Activated CD8-positive, alpha-beta T cell treated with anti-CD3 and anti-CD28 coated beads for 36 hours (primary cell): ENCODE measurements at regions of chr14 and their contacts with region 1.

Region 1: GRCh38 chr14:22570132-22570949 is 18.7 kb downstream of the DAD1 start:
- DNase-seq: peak; percentile 91
- ATAC-seq: peak; percentile 81
- H3K4me3 Mint-ChIP-seq: peak overlapping the region; percentile 86
- H3K27ac Mint-ChIP-seq: peak overlapping the region; percentile 94
- H3K4me1 Mint-ChIP-seq: peaks cover 60% of the 10 kb centered on the region
- H3K27me3 Mint-ChIP-seq: no peaks in the 10 kb centered on the region
- CTCF ChIP-seq: peak; percentile 91

Region 2: DNA sequence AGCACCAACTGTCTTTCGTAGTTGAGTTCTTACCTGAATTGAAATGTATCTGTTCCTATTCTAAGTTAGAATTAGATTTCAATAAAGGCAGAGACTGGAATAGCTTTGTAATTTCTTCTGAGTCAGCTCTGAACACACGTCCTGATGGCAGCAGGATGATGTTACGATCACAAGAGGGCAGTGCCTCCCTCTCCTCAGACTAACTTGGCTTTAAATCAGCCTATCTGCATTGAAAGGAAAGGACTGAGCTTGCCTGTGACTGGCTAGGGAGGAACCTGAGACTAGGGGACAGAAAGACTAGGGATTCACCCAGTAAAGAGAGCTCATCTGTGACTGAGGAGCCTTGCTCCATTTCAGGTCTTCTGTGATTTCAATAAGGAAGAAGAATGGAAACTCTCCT is 573.0 kb before region 1 on chr14:
- CTCF ChIA-PET with region 1: interaction called, 15 read pairs
- POLR2A ChIA-PET with region 1: interaction called, 5 read pairs
- intact Hi-C with region 1: no loop called
- DNase-seq: peak; percentile 66
- ATAC-seq: peak; percentile 88
- H3K4me3 Mint-ChIP-seq: peak overlapping the region; percentile 95
- H3K27ac Mint-ChIP-seq: peak overlapping the region; percentile 96
- H3K4me1 Mint-ChIP-seq: peaks cover 20% of the 10 kb centered on the region
- H3K27me3 Mint-ChIP-seq: no peaks in the 10 kb centered on the region
- CTCF ChIP-seq: peak; percentile 33

Region 3: DNA sequence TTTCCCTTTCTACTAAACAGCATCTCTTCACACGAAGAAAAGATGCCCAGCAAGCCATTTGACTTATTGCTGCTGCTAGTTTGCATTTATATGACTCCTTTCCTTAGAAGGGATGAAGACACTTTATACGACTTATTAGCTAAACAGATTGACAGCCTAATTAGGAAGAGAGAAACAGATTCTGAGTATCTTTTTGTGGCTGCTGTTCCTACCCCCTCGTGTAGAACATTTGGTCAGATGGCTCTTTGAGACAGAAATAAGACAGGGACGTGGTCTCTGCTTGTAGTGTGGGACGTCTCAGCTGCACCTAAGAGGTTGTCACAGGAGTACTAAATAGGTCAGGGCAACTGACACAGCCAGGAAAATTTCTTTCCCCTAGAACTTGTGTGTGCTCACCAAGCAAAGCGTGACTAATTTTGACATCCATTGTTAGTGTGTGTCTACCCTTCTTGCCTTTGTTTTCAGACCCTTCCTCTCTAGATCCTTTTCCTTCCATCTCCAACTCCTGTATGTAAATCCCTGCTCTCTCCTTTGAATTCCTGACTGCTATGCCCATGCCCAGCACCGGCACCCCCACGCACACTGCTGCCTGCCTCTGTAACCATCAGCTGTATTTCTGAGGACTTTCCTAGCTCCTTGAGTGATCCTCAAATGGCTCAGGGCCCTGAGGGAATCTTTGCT is 64.5 kb before region 1 on chr14:
- CTCF ChIA-PET with region 1: interaction called, 8 read pairs
- POLR2A ChIA-PET with region 1: interaction called, 33 read pairs
- intact Hi-C with region 1: no loop called
- DNase-seq: no peak
- ATAC-seq: peak; percentile 38
- H3K4me3 Mint-ChIP-seq: peak overlapping the region; percentile 79
- H3K27ac Mint-ChIP-seq: peak overlapping the region; percentile 96
- H3K4me1 Mint-ChIP-seq: peaks cover 10% of the 10 kb centered on the region
- H3K27me3 Mint-ChIP-seq: no peaks in the 10 kb centered on the region
- CTCF ChIP-seq: no peak

Region 4: GRCh38 chr14:22556990-22557623 is 13.2 kb before region 1 on chr14:
- CTCF ChIA-PET with region 1: interaction called, 259 read pairs
- POLR2A ChIA-PET with region 1: interaction called, 397 read pairs
- intact Hi-C with region 1: loop called (anchors 1 kb)
- DNase-seq: peak; percentile 93
- ATAC-seq: peak; percentile 5
- H3K4me3 Mint-ChIP-seq: peak overlapping the region; percentile 82
- H3K27ac Mint-ChIP-seq: peak overlapping the region; percentile 94
- H3K4me1 Mint-ChIP-seq: peaks cover 84% of the 10 kb centered on the region
- H3K27me3 Mint-ChIP-seq: peaks cover 3% of the 10 kb centered on the region
- CTCF ChIP-seq: peak; percentile 100

Region 5: GRCh38 chr14:22766456-22767322 is 196.3 kb after region 1 on chr14 and contains the start of gene OXA1L:
- CTCF ChIA-PET with region 1: interaction called, 38 read pairs
- POLR2A ChIA-PET with region 1: interaction called, 14 read pairs
- intact Hi-C with region 1: no loop called
- DNase-seq: peak; percentile 97
- ATAC-seq: peak; percentile 90
- H3K4me3 Mint-ChIP-seq: peak within 1 kb of the TSS; percentile 85
- H3K27ac Mint-ChIP-seq: peak within 1 kb of the TSS; percentile 98
- H3K4me1 Mint-ChIP-seq: peaks cover 26% of the 10 kb centered on the region
- H3K27me3 Mint-ChIP-seq: no peaks in the 10 kb centered on the region
- CTCF ChIP-seq: no peak
- total RNA-seq, gene OXA1L: 134 to 140 TPM

Region 6: DNA sequence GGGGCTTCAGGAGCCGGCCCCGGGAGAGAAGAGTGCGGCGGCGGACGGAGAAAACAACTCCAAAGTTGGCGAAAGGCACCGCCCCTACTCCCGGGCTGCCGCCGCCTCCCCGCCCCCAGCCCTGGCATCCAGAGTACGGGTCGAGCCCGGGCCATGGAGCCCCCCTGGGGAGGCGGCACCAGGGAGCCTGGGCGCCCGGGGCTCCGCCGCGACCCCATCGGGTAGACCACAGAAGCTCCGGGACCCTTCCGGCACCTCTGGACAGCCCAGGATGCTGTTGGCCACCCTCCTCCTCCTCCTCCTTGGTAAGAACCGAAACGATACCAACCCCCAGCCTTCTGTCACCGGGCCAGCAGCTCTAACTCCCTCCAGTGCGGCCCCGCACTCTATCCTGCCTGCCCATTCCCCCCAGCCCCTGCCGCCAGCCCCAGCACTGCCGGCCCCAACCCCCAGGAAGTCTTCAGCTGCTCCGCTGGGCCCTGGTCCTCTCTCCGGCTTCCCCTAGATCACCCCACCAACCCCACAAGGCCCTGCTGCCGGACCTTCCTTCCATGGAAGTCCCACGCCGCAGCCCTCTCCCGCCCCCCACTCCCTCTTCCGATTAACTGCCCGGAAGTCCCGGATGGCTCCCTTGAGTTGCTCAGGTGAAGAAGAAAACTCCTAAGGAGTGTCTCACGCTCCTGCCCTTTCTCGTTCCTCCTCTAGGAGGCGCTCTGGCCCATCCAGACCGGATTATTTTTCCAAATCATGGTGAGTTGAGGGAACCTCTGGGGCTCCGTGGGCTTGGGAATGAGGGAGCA is 301.9 kb after region 1 on chr14:
- CTCF ChIA-PET with region 1: interaction called, 17 read pairs
- POLR2A ChIA-PET with region 1: interaction called, 3 read pairs
- intact Hi-C with region 1: no loop called
- DNase-seq: peak; percentile 78
- ATAC-seq: peak; percentile 22
- H3K4me3 Mint-ChIP-seq: peak overlapping the region; percentile 93
- H3K27ac Mint-ChIP-seq: peak overlapping the region; percentile 79
- H3K4me1 Mint-ChIP-seq: peaks cover 25% of the 10 kb centered on the region
- H3K27me3 Mint-ChIP-seq: no peaks in the 10 kb centered on the region
- CTCF ChIP-seq: peak; percentile 91